A549 (cell line): ENCODE measurements at regions of chr10 and their contacts with region 1.

Region 1: DNA sequence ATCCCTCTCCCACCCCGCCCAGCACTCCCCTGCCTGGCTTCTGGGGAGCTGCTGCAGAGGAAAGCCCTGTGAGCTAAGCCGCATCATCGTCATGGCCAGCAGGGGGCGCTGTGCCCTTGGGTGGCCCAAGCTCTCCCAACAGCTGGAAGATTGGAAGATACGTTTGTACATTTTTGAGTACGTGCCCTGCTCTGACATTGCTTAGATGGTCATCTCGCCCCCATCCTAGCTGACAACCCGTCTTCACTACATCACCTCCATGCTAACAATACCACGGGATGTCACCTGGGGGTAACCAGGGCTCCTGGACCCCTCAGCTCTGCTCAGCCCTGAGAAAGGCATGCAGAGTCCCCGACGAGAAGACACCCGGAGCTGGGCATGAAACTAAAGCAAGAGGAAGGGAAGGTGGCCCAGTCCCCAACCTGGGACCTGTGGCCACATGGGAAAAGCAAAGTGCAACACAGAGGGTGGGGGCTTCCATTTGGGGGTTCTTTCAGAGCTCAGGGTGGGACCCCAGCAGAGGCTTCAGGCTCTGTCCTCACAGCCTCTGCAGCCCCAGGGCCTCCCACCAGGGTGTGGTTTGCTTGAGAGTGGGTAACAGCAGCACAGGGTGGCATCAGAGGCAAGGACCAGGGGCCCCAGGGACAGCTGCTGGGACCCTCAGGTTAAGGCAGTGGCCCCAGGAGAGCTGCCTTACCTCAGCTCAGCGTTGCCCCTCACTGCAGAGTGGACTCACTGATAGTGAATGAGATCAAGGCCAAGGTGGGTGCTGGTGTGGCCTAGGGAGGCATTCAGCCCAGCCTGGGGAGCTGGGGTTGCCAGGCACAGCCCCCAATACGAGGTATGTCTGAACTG is 136.7 kb downstream of the PTPN20 start:
- DNase-seq: peak; percentile 71 to 75
- ATAC-seq: peak; percentile 79 to 95
- H3K4me3 ChIP-seq: no peak overlapping the region
- H3K27ac ChIP-seq: no peak overlapping the region
- H3K4me1 ChIP-seq: no peaks in the 10 kb centered on the region
- CTCF ChIP-seq: peak; percentile 84
- EP300 ChIP-seq: no peak
- POLR2A ChIP-seq: no peak
- RAD21 ChIP-seq: peak; percentile 77 to 89

Region 2: GRCh38 chr10:47031211-47031900 is 16.5 kb before region 1 on chr10:
- CTCF ChIA-PET with region 1: interaction called, 61 read pairs
- POLR2A ChIA-PET with region 1: no interaction called
- DNase-seq: peak; percentile 29 to 44
- ATAC-seq: peak in 1 of 2 experiments; percentile 60; a peak in 3 of 6 replicates
- H3K4me3 ChIP-seq: no peak overlapping the region
- H3K27ac ChIP-seq: no peak overlapping the region
- H3K4me1 ChIP-seq: no peaks in the 10 kb centered on the region
- CTCF ChIP-seq: no peak
- EP300 ChIP-seq: no peak
- POLR2A ChIP-seq: no peak
- RAD21 ChIP-seq: no peak

Region 3: DNA sequence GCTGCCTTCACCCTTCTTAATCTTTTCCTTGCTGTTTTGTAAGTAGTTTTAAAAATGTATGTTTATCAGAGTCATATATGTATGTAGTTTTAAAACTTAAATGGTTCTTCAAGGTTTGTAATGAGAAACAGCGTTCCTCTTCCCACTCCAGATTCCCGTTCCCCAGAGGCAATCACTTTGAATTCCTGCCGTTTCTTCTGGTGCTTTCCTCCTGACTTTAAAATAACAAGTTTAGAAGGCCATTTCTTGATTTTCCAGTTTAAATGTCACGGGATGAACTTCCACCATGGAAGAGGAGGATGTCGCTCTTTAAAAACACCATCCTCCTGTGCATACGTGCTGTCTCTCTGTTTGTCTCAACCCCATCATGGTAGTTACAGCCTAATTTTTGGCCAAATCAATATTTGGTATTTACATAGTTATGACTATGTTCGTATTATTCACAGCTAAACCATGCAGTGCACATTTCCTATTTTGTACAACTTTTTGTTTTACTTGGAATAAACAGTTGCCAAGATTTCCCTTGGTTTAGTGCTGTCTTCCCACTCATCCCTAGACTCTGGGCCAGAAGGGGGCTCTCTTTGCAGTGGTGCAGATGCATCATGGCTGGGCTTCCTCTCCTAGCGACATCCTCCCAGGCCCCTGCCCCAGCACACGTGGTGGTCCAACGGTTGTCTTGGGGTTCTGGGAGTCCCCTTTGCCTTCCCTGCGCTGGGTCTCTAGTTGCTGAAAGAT is 14.7 kb after region 1 on chr10:
- CTCF ChIA-PET with region 1: interaction called, 26 read pairs
- POLR2A ChIA-PET with region 1: no interaction called
- DNase-seq: no peak
- ATAC-seq: peak in 1 of 2 experiments; percentile 73; a peak in 3 of 6 replicates
- H3K4me3 ChIP-seq: no peak overlapping the region
- H3K27ac ChIP-seq: no peak overlapping the region
- H3K4me1 ChIP-seq: no peaks in the 10 kb centered on the region
- CTCF ChIP-seq: no peak
- EP300 ChIP-seq: no peak
- POLR2A ChIP-seq: no peak
- RAD21 ChIP-seq: peak; percentile 11 to 22; a peak in 1 of 5 replicates

Region 4: DNA sequence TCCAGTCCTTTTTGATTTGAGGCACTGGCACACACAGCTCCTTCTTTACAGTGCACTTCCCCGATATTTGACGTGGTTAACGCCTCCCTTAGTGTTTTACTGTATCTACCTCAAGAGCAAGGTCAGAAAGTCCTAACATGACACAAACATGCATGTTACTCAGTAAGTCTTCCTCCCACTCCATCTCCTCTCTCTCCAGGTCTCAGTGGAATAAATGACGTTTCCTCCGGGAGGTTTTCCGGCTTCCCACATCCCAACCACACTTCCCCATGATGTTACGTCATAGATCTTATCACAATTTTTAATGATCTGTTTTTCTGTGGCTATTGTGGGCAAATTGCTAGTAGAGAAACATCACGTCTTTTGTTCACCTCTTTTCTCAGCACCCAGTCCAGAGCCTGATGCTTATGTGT is 29.1 kb after region 1 on chr10:
- CTCF ChIA-PET with region 1: interaction called, 10 read pairs
- POLR2A ChIA-PET with region 1: no interaction called
- DNase-seq: no peak
- ATAC-seq: no peak
- H3K4me3 ChIP-seq: no peak overlapping the region
- H3K27ac ChIP-seq: no peak overlapping the region
- H3K4me1 ChIP-seq: no peaks in the 10 kb centered on the region
- CTCF ChIP-seq: no peak
- EP300 ChIP-seq: no peak
- POLR2A ChIP-seq: no peak
- RAD21 ChIP-seq: no peak

Region 5: DNA sequence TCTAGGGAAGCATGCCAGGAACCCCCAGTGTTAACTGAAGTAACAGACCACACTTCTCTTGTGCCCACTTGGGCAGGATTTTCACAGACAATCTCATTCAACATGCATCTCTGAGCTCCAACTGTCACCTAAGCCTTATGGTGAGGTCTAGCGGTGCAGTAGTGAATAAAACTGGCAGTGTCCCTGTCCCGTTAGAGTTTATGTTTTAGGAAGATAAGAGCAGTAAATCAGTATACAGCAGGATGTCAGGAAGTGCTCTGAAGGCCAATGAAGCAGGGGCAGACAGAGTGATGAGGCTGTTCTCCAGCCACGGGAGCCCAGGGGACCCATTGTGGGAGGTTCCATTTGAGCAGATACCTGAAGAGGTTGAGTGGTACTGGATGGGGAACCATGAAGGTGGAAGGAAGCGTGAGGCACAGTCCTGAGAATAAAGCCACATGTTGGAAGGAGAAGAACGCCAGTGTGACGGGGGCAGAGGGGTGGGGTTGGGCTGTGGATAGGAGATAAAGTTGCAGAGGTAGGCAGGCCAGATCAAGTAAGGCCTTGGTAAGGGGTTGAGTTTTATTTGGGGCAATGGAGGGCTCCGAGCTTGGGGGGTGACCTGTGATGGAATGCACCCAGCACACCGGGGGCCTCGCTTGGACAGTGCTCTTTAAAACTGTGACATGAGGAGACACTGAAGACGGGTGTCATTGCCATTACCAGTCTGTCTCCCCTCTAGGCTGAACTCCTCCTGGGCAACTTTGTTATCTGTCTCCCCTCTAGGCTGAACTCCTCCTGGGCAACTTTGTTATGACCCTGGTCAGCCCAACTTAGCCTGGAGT is 258.7 kb after region 1 on chr10:
- CTCF ChIA-PET with region 1: interaction called, 213 read pairs
- POLR2A ChIA-PET with region 1: interaction called, 4 read pairs
- DNase-seq: no peak
- ATAC-seq: no peak
- H3K4me3 ChIP-seq: no peak overlapping the region
- H3K27ac ChIP-seq: no peak overlapping the region
- H3K4me1 ChIP-seq: no peaks in the 10 kb centered on the region
- CTCF ChIP-seq: no peak
- EP300 ChIP-seq: no peak
- POLR2A ChIP-seq: no peak
- RAD21 ChIP-seq: no peak

Region 6: DNA sequence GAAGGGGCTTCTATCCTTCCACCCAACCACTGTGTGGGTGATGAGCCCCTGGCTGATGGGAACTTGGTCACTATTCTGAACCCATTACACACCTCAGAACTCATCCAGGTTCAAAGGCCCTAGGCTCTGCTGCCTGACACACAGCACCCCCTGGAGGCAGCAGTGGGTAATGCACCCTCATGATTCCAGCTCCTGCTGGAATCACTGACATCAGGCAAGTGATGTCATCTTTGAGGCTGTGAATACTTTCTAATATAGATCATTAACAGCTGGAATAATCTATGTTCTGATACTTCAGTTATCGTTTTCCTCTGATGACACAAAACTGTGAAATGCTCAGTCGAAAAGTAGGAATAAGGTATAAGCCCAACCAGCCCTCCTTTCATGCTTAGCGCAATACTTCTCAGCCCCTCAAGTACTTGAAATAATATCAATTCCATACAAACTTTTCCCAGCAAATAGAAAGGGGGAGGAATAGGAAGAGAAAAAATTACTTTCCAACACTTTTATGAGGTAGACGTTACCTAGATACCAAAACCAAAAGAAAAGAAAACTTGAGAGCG is 292.8 kb after region 1 on chr10:
- CTCF ChIA-PET with region 1: interaction called, 17 read pairs
- POLR2A ChIA-PET with region 1: no interaction called
- DNase-seq: peak; percentile 67 to 87
- ATAC-seq: peak; percentile 77 to 88
- H3K4me3 ChIP-seq: no peak overlapping the region
- H3K27ac ChIP-seq: no peak overlapping the region
- H3K4me1 ChIP-seq: no peaks in the 10 kb centered on the region
- CTCF ChIP-seq: peak; percentile 87
- EP300 ChIP-seq: no peak
- POLR2A ChIP-seq: no peak
- RAD21 ChIP-seq: peak; percentile 66 to 79